HEK293 (cell line): ENCODE measurements at regions of chr11 and their contacts with region 1.

Region 1: GRCh38 chr11:67345920-67346799 is 7.2 kb downstream of the POLD4 start:
- H3K4me3 ChIP-seq: no peak overlapping the region
- H3K27ac ChIP-seq: no peak overlapping the region
- H3K4me1 ChIP-seq: no peaks in the 10 kb centered on the region
- CTCF ChIP-seq: peak; percentile 46; the same call in 1 of the 2 replicates

Region 2: GRCh38 chr11:67332081-67332691 is 14.0 kb before region 1 on chr11:
- CTCF ChIA-PET with region 1: interaction called, 39 read pairs
- POLR2A ChIA-PET with region 1: interaction called, 5 read pairs
- H3K4me3 ChIP-seq: no peak overlapping the region
- H3K27ac ChIP-seq: no peak overlapping the region
- H3K4me1 ChIP-seq: no peaks in the 10 kb centered on the region
- CTCF ChIP-seq: no peak

Region 3: DNA sequence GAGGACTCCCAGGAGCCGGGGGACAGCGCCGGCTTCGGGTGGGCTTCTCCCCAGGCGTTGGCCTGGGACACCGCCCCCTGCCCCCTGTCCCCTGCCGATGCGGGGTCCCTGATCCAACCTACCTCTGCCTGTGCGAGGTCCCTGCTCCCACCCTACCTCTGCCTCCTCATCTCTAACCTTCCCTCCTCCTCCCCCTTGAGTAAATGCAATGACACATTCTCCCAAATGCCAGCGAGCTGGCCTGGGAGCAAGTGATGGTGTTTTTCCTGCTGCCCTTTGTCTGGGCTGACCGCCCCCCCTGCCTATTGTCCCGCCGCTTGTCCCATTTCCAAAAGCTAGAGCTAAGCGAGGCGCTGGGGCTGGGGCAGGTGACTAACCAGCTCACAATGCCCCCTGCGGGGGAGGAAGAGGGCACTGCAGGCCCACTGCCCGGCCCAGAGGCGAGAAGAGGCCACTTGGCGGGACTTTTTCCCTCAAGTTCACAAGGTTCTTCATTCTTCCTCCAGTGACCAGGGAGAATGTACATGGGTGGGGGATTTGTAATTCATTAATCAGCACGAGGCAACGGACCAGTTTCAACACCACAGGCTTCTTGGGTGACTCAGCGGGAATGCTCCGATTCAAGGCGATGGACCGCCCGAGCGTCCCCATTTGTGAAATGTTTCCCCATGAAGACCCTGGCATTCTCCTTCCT is 27.9 kb after region 1 on chr11:
- CTCF ChIA-PET with region 1: interaction called, 898 read pairs
- POLR2A ChIA-PET with region 1: interaction called, 5 read pairs
- H3K4me3 ChIP-seq: peak overlapping the region; percentile 57
- H3K27ac ChIP-seq: no peak overlapping the region
- H3K4me1 ChIP-seq: peaks cover 3% of the 10 kb centered on the region; the same call in 1 of the 2 replicates
- CTCF ChIP-seq: peak; percentile 43; the same call in 1 of the 2 replicates

Region 4: GRCh38 chr11:67382276-67383136 is 36.3 kb after region 1 on chr11:
- CTCF ChIA-PET with region 1: interaction called, 898 read pairs
- POLR2A ChIA-PET with region 1: interaction called, 9 read pairs
- H3K4me3 ChIP-seq: no peak overlapping the region
- H3K27ac ChIP-seq: no peak overlapping the region
- H3K4me1 ChIP-seq: no peaks in the 10 kb centered on the region
- CTCF ChIP-seq: peak; percentile 92

Region 5: GRCh38 chr11:67820081-67820480 is 473.9 kb after region 1 on chr11:
- CTCF ChIA-PET with region 1: no interaction called
- POLR2A ChIA-PET with region 1: no interaction called
- H3K4me3 ChIP-seq: no peak overlapping the region
- H3K27ac ChIP-seq: no peak overlapping the region
- H3K4me1 ChIP-seq: no peaks in the 10 kb centered on the region
- CTCF ChIP-seq: no peak